Activated T-helper 2 cell treated with anti-CD3 and anti-CD28 coated beads, Interferon-gamma antibody, Interleukin-2, Interleukin-4, amounts not matched to agents 10 μg/mL and 5 μg/mL and 100 μg/mL, durations not matched to agents 14 hours and 24 hours and 36 hours (primary cell): ENCODE measurements at regions of chr5 and their contacts with region 1.

Region 1: DNA sequence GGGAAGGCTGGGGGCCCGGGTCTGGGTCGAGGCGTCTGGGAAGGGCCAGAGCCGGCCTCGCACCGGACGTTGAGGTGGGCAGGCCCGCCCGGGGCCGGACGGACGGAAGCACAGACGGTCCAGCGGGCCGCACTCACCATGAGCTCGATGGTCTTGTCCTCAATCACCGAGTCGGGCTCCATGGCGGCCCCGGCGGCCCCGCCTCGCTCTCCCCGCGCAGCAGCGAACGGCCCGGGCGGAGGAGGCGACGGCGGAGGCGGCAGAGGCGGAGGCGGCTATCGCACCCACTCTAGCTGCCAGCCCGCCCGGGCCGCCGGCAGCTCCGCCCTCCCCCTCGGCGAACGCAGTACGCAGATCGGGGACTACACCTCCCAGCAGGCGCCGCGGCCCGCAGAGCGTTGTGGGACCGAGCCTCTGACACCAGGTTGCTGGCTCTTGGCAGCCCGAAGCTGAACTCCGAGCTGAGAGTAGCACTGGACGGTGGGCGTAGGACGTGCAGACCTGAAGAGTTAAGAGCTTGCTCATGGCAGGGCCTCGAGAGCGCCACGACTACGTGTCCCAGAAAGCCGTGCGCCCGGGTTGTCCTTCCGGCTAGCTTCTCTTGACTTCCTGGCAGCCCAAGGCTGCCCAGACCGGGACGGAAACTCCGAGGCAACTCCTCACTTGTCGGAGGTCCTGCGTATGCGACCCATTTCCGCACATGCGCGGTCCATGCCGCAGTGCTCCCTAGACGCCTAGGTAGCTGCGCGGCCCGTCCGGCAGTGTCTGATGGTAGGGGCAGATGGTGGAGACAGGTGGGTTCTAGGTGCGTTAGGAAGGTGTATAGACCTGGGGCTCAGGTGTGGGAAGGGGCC is at the start of gene FBXW11:
- DNase-seq: peak; percentile 92
- H3K4me3 Mint-ChIP-seq: peak within 1 kb of the TSS; percentile 94
- H3K27ac Mint-ChIP-seq: peak within 1 kb of the TSS; percentile 96
- H3K4me1 Mint-ChIP-seq: peaks cover 56% of the 10 kb centered on the region
- H3K27me3 Mint-ChIP-seq: no peaks in the 10 kb centered on the region
- total RNA-seq, gene FBXW11: 47.3 and 51.4 TPM in 2 replicates

Region 2: GRCh38 chr5:171961117-171961516 is 45.4 kb before region 1 on chr5:
- intact Hi-C with region 1: loop called (anchors 1 kb)
- DNase-seq: peak; percentile 15
- H3K4me3 Mint-ChIP-seq: no peak overlapping the region
- H3K27ac Mint-ChIP-seq: peak overlapping the region; percentile 65
- H3K4me1 Mint-ChIP-seq: peaks cover 69% of the 10 kb centered on the region
- H3K27me3 Mint-ChIP-seq: no peaks in the 10 kb centered on the region

Region 3: GRCh38 chr5:171984748-171985419 is 21.7 kb before region 1 on chr5:
- intact Hi-C with region 1: loop called (anchors 1 kb)
- DNase-seq: no peak
- H3K4me3 Mint-ChIP-seq: no peak overlapping the region
- H3K27ac Mint-ChIP-seq: peak overlapping the region; percentile 51
- H3K4me1 Mint-ChIP-seq: peaks cover 38% of the 10 kb centered on the region
- H3K27me3 Mint-ChIP-seq: no peaks in the 10 kb centered on the region

Region 4: DNA sequence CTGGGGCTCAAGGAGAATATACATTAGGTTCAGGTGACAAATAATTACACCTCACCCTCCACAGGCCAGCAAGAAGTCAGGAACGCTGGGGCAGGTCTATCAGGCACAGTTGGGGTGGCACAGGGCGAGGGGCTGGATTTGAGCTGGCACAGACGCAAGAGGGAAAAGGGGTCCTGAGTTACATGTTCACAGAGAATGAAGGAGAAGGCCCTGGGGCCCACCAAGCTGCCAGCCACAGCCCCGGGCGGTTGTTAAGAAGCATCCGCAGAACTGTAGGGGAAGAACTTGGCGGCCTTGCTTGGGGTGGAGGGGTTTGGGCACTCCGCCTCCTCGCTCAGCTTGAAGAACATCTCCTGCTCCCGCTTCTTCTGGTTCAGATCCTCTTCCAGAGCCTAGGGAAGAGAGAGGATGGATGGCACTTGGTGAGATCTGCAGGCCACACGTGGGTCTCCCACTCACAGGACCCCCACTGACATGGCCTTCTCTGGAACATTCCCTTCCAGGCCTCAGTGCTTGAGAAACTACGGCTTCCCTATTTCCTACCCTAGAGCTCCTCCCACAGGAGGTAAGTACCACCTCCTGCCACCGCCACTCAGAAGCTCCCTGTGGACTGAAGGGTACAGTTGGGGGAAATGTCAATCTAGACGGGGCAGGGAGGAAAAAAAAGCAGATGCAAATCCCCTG is 38.2 kb after region 1 on chr5:
- intact Hi-C with region 1: loop called (anchors 5 kb)
- DNase-seq: no peak
- H3K4me3 Mint-ChIP-seq: no peak overlapping the region
- H3K27ac Mint-ChIP-seq: peak overlapping the region; percentile 64
- H3K4me1 Mint-ChIP-seq: no peaks in the 10 kb centered on the region
- H3K27me3 Mint-ChIP-seq: no peaks in the 10 kb centered on the region

Region 5: GRCh38 chr5:172283020-172283861 is 276.7 kb after region 1 on chr5 and contains the start of gene UBTD2:
- intact Hi-C with region 1: loop called (anchors 1 kb)
- DNase-seq: peak; percentile 79
- H3K4me3 Mint-ChIP-seq: peak within 1 kb of the TSS; percentile 89
- H3K27ac Mint-ChIP-seq: peak within 1 kb of the TSS; percentile 75
- H3K4me1 Mint-ChIP-seq: peaks cover 24% of the 10 kb centered on the region
- H3K27me3 Mint-ChIP-seq: peaks cover 25% of the 10 kb centered on the region
- total RNA-seq, gene UBTD2: 6.6 TPM in 2 replicates